ENCODE measurements at regions of chr3 and their contacts with region 1.

Region 1: DNA sequence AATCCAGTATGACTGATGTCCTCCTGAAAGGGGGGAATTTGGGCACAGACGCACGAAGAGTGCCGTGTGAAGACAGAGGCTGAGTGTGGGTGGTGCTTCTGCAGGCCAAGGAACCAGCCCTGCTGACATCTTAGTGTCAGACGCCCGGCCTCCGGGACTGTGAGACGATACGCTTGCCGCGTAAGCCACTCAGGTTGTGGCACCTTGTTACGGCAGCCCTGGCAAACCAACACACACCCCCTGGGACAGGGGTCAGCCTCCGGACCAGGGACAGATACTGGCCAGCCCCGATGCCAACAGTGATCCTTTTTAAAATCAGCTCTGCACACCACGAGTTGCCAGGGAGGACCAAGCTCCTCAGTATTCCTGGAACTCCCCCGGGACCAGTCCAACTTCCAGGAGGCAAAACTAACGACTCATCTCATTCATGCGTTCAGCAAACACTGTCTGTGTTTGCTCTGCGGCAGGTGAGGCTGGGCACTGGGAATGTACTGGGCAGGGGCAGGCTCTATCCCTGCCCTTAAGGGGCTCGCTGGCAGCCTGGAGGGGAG is 21.2 kb upstream of the PIGZ start:
- DNase-seq: no peak
- H3K4me3 ChIP-seq: no peak overlapping the region
- CTCF ChIP-seq: no peak

Region 2: DNA sequence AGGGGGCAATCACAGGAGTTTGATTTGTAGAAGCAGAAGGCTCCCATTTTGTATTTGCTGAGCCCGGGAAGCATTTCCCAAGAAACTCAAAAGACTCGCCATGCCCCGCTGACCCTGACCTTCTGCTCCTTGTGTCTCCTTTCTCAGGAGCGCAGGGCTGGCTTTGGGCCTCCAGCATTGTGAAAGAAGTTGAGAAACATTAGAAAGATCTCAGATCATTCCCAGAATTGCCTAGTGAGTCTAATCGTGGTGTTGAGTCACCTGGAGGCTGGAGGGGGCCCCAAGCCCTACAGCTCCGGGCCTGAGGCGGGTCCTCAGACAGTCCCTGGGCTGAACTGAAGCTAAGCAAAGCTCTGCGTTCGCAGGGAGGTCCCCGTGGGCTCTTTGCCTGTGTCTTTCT is 10.3 kb before region 1 on chr3:
- CTCF ChIA-PET with region 1: interaction called, 13 read pairs
- POLR2A ChIA-PET with region 1: no interaction called
- DNase-seq: peak; percentile 17
- H3K4me3 ChIP-seq: no peak overlapping the region
- CTCF ChIP-seq: no peak

Region 3: GRCh38 chr3:197002701-197003454 is 13.1 kb after region 1 on chr3:
- CTCF ChIA-PET with region 1: interaction called, 26 read pairs
- POLR2A ChIA-PET with region 1: no interaction called
- DNase-seq: no peak
- H3K4me3 ChIP-seq: peak overlapping the region; percentile 62
- CTCF ChIP-seq: peak; percentile 82

Region 4: GRCh38 chr3:197022405-197023231 is 32.8 kb after region 1 on chr3:
- CTCF ChIA-PET with region 1: no interaction called
- POLR2A ChIA-PET with region 1: no interaction called
- DNase-seq: no peak
- H3K4me3 ChIP-seq: no peak overlapping the region
- CTCF ChIP-seq: no peak

Region 5: DNA sequence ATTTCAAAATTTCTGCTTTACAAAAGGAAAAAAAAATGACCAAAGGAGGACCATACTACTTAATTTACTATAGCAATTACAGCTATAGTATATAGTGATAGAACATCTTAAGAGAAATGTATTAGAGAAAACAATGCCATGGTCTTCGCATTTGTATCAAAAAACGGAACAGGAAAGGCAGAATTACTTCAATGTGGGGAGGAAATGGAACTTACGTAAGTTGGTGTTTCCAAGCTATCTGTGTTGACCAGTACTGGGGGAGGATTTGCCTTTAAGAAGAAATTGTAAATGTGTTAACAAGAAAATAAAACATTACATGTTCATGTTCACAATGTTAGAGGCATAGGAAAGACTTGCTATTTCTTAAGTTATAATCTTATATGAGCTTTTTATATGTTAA is 159.7 kb after region 1 on chr3:
- CTCF ChIA-PET with region 1: no interaction called
- POLR2A ChIA-PET with region 1: no interaction called
- DNase-seq: no peak
- H3K4me3 ChIP-seq: no peak overlapping the region
- CTCF ChIP-seq: no peak

Region 6: GRCh38 chr3:197270558-197271317 is 280.9 kb after region 1 on chr3:
- CTCF ChIA-PET with region 1: no interaction called
- POLR2A ChIA-PET with region 1: no interaction called
- DNase-seq: no peak
- H3K4me3 ChIP-seq: no peak overlapping the region
- CTCF ChIP-seq: no peak

Measured in AG04449 (cell line).